HEK293 (cell line): ENCODE measurements at regions of chr17 and their contacts with region 1.

Region 1: GRCh38 chr17:2366747-2367494 is 29.6 kb downstream of the SGSM2 start:
- H3K4me3 ChIP-seq: no peak overlapping the region
- H3K27ac ChIP-seq: no peak overlapping the region
- H3K4me1 ChIP-seq: no peaks in the 10 kb centered on the region; the same call in 1 of the 2 replicates
- CTCF ChIP-seq: no peak

Region 2: GRCh38 chr17:2354311-2354710 is 12.6 kb before region 1 on chr17:
- CTCF ChIA-PET with region 1: interaction called, 20 read pairs
- POLR2A ChIA-PET with region 1: no interaction called
- H3K4me3 ChIP-seq: no peak overlapping the region
- H3K27ac ChIP-seq: no peak overlapping the region
- H3K4me1 ChIP-seq: peaks cover 4% of the 10 kb centered on the region; the same call in 1 of the 2 replicates
- CTCF ChIP-seq: no peak

Region 3: DNA sequence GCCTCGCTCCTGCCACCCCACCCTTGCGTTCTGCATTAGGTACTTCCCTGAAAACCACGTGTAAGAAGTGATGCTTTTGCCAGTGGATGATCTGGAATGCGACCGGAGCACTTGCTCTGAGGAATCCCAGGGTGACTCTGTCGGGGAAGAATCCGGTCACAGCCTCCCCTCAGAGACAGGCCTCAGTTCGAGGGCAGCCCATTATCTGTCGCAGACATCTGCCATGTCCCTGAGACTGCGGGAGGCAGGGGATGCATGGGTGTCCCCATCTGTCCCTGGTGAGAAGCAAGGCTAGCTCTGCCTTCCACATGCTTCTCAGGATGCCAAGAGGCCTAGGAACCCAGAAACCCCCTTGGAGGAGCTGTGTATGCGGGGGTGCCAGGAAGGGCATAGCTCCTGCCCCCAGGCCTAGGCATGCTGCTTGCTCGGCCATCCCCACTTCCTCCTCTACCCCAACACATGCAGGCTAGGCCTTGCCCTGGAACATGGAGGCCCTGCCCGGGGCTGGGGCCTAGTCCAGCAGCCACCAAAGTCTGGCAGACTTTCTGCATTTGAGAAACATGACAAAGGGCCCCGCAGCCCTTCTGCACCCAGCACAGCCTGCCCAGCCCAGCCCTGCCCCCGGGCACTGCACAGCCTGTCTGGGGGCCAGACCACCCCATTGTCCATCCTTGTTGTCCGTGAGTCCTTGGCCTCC is 13.5 kb after region 1 on chr17:
- CTCF ChIA-PET with region 1: interaction called, 63 read pairs
- POLR2A ChIA-PET with region 1: interaction called, 7 read pairs
- H3K4me3 ChIP-seq: no peak overlapping the region
- H3K27ac ChIP-seq: no peak overlapping the region
- H3K4me1 ChIP-seq: peaks cover 14% of the 10 kb centered on the region
- CTCF ChIP-seq: no peak

Region 4: DNA sequence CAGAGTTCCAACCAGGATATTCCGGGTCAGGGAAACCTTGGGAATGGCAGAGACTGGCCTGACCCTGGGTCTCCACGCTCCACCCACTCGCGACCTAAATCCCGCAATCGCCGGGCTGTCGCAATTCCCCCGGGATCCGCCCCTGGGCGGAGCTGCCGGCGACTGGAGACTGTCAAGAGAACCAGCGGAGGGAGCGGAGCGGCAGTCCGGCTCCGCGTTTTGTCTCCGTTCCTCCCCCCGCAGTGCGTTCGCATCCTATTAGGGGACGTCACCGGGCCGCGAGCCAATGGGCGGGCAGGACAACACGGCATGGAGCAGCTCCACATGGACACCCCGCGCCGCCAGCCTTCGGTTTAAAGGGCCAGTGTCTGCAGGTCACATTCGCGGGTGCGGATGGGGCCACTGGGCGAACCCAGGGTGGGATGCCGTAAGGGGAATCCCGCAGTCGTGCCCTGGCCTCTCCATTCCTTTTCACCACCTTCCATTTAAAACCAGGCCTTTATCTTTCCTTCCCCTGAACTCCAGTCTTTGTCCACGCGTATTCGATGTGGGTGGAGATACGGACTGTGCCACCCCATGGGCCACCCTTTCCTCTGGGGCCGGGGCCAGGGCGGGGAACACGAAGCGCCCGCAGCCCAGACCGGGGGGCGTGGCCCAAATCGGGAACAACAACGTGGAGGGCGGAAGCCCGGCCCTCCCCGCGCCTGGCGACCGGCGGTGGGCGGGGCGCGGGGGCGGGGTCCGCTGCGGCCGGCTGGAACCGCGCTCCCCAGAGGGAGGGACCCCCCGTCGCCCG is 34.7 kb after region 1 on chr17:
- CTCF ChIA-PET with region 1: no interaction called
- POLR2A ChIA-PET with region 1: no interaction called
- H3K4me3 ChIP-seq: peak overlapping the region; percentile 43
- H3K27ac ChIP-seq: peak overlapping the region; percentile 77
- H3K4me1 ChIP-seq: peaks cover 19% of the 10 kb centered on the region
- CTCF ChIP-seq: no peak